Breast epithelium (tissue), 4 donors: ENCODE measurements at regions of chr3 and their contacts with region 1.

Region 1: DNA sequence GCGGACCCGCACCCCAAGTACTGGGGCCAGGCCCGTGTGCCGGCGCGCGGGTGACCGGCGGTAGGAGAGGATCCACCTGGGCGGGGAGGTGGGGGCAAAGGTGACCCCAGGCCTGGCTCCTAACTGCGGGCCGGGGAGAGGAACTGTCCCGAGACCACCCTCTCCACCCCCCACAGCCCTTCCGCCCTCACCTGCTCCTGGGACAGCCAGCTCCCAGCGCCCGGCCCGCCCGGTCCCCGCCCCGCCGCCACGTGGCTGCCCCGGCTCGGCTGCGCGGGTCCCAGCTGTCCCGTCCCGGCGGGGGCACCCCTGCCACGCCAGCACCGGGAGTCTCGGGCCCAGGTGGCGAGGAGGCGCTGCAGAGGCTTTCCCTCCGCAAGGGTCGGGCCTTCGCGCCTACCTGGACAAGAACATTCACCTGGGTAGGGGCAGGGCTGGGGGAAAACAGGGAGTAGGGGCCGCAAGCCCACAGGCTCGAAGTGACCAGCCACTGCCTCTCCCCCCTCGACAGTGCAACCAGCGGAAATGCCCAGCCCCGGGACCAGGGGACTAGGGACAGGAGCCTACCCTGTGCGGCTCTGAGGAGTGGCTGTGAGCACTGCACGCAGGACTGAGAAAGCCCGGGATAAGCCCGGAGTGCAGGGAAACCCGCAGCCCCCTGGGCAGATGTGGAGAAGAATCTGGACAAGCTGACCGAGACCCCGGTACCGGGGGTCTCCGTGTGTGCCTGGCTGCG is at the start of gene SLC12A8:
- DNase-seq: no peak
- H3K4me3 ChIP-seq: peak within 1 kb of the TSS; percentile 28 to 68 (median 67)
- H3K27ac ChIP-seq: peak within 1 kb of the TSS in 1 of 2 donors; percentile 17
- H3K4me1 ChIP-seq: no peaks in the 10 kb centered on the region
- H3K27me3 ChIP-seq: no peaks in the 10 kb centered on the region
- CTCF ChIP-seq: no peak
- POLR2A ChIP-seq: no peak
- total RNA-seq, gene SLC12A8: 0.48 to 12.5 (median 9.8) TPM

Region 2: DNA sequence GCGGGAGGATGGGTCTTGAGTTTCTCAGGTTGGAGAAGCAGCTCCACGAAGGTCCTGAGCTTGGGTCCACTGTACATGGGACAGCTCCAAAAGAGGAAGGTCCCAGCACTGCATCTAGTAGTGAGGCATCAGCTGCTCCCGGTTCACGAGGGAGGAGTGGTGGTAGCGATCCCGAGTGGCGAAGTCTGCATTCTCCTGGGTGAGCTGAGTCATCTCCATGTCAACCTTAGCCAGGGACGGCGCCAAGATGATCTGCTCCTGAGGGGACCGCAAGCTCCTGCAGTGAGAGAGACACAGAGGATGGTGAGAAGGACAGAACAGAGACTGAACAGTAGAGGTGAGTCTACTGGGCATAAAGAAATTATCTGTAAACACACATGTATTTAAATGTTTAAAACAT is 128.9 kb before region 1 on chr3:
- intact Hi-C with region 1: loop called (anchors 5 kb)
- DNase-seq: no peak
- H3K4me3 ChIP-seq: no peak overlapping the region
- H3K27ac ChIP-seq: no peak overlapping the region
- H3K4me1 ChIP-seq: no peaks in the 10 kb centered on the region
- H3K27me3 ChIP-seq: no peaks in the 10 kb centered on the region
- CTCF ChIP-seq: no peak
- POLR2A ChIP-seq: no peak